Posterior vena cava (tissue), 2 donors: ENCODE measurements at regions of chr15 and their contacts with region 1.

Region 1: GRCh38 chr15:77985031-77985930 is 92.2 kb downstream of the TBC1D2B start:
- DNase-seq: peak; percentile 66

Region 2: DNA sequence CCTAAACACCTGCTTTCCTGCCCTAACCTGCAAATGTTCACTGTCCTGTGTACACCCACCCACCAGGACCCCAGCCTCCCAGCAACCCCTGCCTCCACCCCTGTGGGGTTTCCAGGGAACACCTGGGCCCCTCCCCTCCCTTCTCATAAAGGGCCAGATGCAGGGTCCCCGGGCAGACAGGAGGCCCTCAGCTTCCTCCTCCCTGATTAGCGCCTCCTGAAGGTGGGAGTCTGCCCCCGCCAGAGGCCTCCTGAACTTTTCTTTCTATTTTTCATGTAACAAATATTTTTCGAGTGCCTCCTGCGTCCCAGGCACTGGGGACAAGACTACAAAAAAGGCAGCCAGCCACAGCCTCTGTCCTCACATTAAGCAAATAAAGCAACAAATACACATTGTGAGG is 217.2 kb before region 1 on chr15:
- intact Hi-C with region 1: no loop called
- DNase-seq: no peak

Region 3: DNA sequence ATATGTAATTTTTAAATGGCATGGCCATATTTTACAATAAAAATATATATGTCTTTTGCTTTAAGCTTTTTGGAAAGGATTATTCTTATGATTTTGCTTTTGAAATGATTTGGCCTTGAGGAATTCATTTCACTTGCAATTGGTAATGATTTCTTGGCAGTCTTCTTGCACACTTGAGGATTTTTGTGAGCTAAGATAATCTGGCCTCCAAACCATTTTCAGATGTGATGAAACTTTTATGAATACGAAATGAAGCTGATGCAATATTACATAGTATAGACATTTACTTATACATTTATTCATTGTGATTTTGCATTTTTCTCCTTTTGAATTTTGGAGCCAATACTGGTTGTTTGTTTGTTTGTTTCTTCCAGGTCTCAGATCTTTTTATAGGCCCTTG is 100.6 kb after region 1 on chr15:
- intact Hi-C with region 1: loop called in 1 of 2 experiments (anchors 1 kb)
- DNase-seq: no peak